HepG2 (cell line): ENCODE measurements at regions of chr22 and their contacts with region 1.

Region 1: GRCh38 chr22:29553351-29554224 is at the start of gene THOC5:
- DNase-seq: peak; percentile 96
- ATAC-seq: peak; percentile 99
- H3K4me3 ChIP-seq: peak within 1 kb of the TSS; percentile 80 to 97 (median 86)
- H3K27ac ChIP-seq: peak within 1 kb of the TSS; percentile 87
- H3K4me1 ChIP-seq: peaks cover 14% of the 10 kb centered on the region
- H3K27me3 ChIP-seq: no peaks in the 10 kb centered on the region
- CTCF ChIP-seq: peak; percentile 95
- EP300 ChIP-seq: no peak
- POLR2A ChIP-seq: peak; percentile 62 to 73
- RAD21 ChIP-seq: peak; percentile 41
- total RNA-seq, gene THOC5: 46.7 and 53.5 TPM in 2 replicates

Region 2: DNA sequence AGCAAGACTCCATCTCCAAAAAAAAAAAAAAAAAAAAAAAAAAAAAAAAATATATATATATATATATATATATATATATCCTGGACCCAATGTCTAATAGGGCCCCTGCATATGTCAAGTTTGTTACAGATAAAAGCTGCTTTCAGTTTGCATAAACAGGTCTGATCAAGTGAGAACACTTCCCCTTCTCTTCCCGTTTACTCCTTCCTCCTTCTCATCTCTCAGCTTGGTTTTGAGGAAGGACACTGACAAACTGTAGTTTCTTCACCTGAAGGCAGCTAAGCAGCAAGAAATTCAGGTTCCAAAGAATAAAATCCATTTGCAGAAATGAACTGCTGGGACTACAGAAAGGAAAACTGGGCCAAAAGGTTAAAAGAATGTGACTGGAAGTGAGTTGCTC is 11.7 kb before region 1 on chr22:
- CTCF ChIA-PET with region 1: no interaction called
- POLR2A ChIA-PET with region 1: interaction called, 16 read pairs
- in situ Hi-C with region 1: no loop called
- intact Hi-C with region 1: no loop called
- DNase-seq: no peak
- ATAC-seq: no peak
- H3K4me3 ChIP-seq: no peak overlapping the region
- H3K27ac ChIP-seq: no peak overlapping the region
- H3K4me1 ChIP-seq: peaks cover 5% of the 10 kb centered on the region
- H3K27me3 ChIP-seq: no peaks in the 10 kb centered on the region
- CTCF ChIP-seq: no peak
- EP300 ChIP-seq: no peak
- POLR2A ChIP-seq: no peak
- RAD21 ChIP-seq: no peak

Region 3: DNA sequence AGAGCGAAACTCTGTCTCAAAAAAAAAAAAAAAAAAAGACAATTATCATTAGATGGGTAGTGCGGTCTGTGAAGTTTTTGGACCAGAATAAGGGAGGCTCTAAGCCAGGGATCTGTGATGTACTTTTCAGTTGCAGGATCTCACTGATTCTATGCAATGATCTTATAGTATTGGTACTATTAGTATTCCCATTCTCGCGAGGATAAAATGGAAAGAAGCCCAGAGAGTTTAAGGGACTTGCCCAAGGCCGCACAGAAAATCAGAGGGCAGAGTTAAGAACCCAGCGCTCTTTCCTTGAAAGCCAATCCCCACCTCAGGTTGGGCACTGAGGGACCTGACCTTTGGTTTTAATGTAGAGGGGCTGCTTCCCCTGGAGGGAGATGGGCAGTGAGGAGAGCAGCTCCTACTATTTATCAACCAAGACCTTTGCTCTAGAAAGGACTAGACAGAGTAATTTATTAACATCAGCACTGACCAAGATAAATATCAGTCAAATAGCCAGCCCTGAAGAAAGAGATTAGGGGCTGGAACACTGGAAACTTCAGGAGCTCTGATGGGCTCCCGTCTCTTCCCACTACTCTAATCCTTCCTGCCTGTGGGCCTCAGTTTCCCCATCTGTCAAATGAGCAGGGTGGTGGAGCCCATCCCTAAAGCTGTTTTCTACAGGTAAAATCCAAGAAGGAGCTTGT is 21.3 kb after region 1 on chr22:
- CTCF ChIA-PET with region 1: no interaction called
- POLR2A ChIA-PET with region 1: interaction called, 95 read pairs
- in situ Hi-C with region 1: no loop called
- intact Hi-C with region 1: loop called (anchors 1 kb)
- DNase-seq: peak; percentile 81
- ATAC-seq: peak; percentile 85
- H3K4me3 ChIP-seq: peak overlapping the region in 2 of 3 experiments; percentile 45 to 47; a peak in 2 of 6 replicates
- H3K27ac ChIP-seq: peak overlapping the region; percentile 90
- H3K4me1 ChIP-seq: peaks cover 95% of the 10 kb centered on the region
- H3K27me3 ChIP-seq: no peaks in the 10 kb centered on the region
- CTCF ChIP-seq: no peak
- EP300 ChIP-seq: no peak
- POLR2A ChIP-seq: peak; percentile 43 to 52; a peak in 2 of 4 replicates
- RAD21 ChIP-seq: no peak

Region 4: DNA sequence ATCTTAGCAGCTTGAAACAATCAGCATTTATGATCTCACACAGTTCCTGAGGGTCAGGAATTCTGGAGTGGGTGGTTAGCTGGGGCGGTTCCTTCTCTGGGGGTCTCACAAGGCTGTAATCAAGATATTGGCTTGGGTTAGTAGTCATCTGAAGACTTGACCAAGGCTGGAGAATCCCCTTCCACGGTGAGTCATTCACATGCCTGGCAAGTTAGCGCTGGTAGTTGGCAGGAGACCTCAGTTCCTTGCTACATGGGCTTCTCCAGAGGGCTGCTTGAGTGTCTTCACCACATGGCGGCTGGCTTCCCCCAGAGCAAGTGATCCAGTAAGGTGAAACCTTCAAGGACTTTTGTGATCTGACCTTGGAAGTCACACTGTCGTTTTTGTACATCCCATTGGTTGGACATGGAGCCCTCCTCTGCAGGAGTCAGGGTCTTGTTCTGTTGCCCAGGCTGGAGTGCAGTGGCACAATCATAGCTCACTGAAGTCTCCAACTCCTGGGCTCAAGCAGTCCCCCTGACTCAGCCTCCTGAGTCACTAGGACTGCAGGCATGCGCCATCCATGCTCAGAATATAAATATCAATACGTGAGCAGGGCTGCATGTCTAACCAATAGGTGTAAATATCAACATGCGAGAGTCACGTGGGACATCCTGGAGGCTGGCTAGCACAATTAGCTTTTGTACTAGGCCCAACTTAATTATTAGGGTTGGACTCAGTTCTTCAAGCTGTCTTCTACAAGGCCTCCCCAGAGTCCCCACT is 34.5 kb after region 1 on chr22:
- CTCF ChIA-PET with region 1: interaction called, 11 read pairs
- POLR2A ChIA-PET with region 1: interaction called, 35 read pairs
- in situ Hi-C with region 1: no loop called
- intact Hi-C with region 1: no loop called
- DNase-seq: peak; percentile 41
- ATAC-seq: peak; percentile 73
- H3K4me3 ChIP-seq: peak overlapping the region; percentile 8 to 40 (median 31); a peak in 5 of 6 replicates
- H3K27ac ChIP-seq: peak overlapping the region; percentile 10
- H3K4me1 ChIP-seq: peaks cover 46% of the 10 kb centered on the region
- H3K27me3 ChIP-seq: no peaks in the 10 kb centered on the region; a peak in 1 of 5 replicates
- CTCF ChIP-seq: no peak
- EP300 ChIP-seq: no peak
- POLR2A ChIP-seq: no peak
- RAD21 ChIP-seq: no peak

Region 5: DNA sequence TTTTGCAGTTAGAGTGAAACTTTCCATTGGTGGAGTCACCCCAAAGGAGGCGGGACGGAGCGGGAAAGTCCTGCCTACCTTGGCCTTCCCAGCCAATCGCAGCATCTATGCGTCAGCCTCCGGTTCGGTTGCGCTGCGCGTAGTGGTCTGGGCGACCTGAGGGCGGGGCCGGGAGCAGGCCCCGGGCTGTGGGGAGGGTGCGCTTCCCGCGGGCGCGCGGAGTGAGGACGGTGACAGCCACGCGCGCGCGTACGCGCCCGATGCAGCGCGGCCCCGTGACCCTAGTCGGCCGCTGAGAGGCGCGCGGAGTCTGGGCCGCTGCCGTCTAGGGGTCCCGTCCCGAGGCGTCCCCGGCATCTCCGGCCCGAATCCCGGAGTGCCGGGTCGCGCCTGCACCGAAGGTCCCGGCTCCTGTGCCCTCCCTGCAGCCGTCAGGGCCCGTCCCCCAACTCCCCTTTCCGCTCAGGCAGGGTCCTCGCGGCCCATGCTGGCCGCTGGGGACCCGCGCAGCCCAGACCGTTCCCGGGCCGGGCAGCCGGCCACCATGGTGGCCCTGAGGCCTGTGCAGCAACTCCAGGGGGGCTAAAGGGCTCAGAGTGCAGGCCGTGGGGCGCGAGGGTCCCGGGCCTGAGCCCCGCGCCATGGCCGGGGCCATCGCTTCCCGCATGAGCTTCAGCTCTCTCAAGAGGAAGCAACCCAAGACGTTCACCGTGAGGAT is 49.9 kb after region 1 on chr22 and contains the start of gene NF2:
- CTCF ChIA-PET with region 1: no interaction called
- POLR2A ChIA-PET with region 1: interaction called, 13 read pairs
- in situ Hi-C with region 1: no loop called
- intact Hi-C with region 1: no loop called
- DNase-seq: peak; percentile 99
- ATAC-seq: peak; percentile 97
- H3K4me3 ChIP-seq: peak within 1 kb of the TSS; percentile 88 to 96 (median 93)
- H3K27ac ChIP-seq: peak within 1 kb of the TSS; percentile 77
- H3K4me1 ChIP-seq: peaks cover 24% of the 10 kb centered on the region
- H3K27me3 ChIP-seq: no peaks in the 10 kb centered on the region; a peak in 1 of 5 replicates
- CTCF ChIP-seq: peak; percentile 22; the same call in 1 of the 2 replicates
- EP300 ChIP-seq: no peak
- POLR2A ChIP-seq: peak; percentile 63 to 64; a peak in 3 of 4 replicates
- RAD21 ChIP-seq: no peak; the same call in none of the 2 replicates
- total RNA-seq, gene NF2: 33.3 and 45.3 TPM in 2 replicates